PC-3 (cell line): ENCODE measurements at regions of chr21 and their contacts with region 1.

Region 1: GRCh38 chr21:14737922-14738321 is 191.8 kb upstream of the SAMSN1 start:
- DNase-seq: peak; percentile 83
- ATAC-seq: peak; percentile 81
- H3K4me3 ChIP-seq: no peak overlapping the region
- H3K27ac ChIP-seq: no peak overlapping the region
- H3K4me1 ChIP-seq: peaks cover 19% of the 10 kb centered on the region
- H3K27me3 ChIP-seq: no peaks in the 10 kb centered on the region
- CTCF ChIP-seq: peak; percentile 92

Region 2: GRCh38 chr21:14438211-14438610 is 299.7 kb before region 1 on chr21:
- CTCF ChIA-PET with region 1: no interaction called
- POLR2A ChIA-PET with region 1: no interaction called
- intact Hi-C with region 1: loop called (anchors 5 kb)
- DNase-seq: no peak
- ATAC-seq: no peak
- H3K4me3 ChIP-seq: no peak overlapping the region
- H3K27ac ChIP-seq: no peak overlapping the region
- H3K4me1 ChIP-seq: no peaks in the 10 kb centered on the region
- H3K27me3 ChIP-seq: no peaks in the 10 kb centered on the region
- CTCF ChIP-seq: no peak

Region 3: DNA sequence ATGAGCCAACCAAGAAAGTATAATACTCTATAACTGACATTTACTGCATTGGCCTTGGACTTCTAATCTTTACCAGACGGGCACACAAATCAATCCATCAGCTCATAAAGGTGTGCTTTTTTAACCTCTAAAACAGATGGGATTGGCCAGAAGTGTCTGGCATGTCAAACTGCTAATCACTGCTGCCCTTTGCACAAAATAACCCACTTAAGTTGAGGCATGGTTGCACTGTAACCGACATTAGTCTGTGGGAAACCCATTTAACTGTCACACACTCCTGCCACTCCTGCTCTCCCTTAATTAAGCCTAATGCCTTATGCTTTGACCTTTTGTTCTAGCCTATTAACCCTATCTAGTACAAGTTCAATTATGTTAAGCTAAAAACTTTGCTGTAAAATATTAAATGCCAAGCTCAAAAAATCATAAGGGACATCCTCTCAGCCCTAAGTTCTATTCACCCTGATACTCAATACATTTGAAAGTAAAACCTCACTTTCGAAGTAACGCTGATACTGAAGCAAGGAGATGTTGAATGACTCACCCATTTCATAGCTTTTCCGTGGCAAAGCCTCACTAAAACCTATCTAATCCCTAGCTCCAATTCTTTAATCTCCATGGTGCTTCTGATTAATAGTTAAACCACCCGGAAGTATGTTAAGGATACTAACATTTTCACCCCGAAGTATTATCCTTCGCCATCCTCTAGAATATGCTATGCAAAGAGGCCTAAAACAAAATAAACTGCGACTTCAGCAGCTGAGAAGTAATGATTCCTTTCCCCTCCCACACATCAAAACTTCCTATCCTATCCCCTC is 313.9 kb after region 1 on chr21:
- CTCF ChIA-PET with region 1: no interaction called
- POLR2A ChIA-PET with region 1: no interaction called
- intact Hi-C with region 1: loop called (anchors 10 kb)
- DNase-seq: peak; percentile 61
- ATAC-seq: peak; percentile 43
- H3K4me3 ChIP-seq: peak overlapping the region; percentile 59
- H3K27ac ChIP-seq: peak overlapping the region; percentile 36
- H3K4me1 ChIP-seq: peaks cover 58% of the 10 kb centered on the region
- H3K27me3 ChIP-seq: no peaks in the 10 kb centered on the region
- CTCF ChIP-seq: no peak

Region 4: GRCh38 chr21:16650714-16651366 is 1912.9 kb after region 1 on chr21:
- CTCF ChIA-PET with region 1: no interaction called
- POLR2A ChIA-PET with region 1: no interaction called
- intact Hi-C with region 1: no loop called
- DNase-seq: no peak
- ATAC-seq: no peak
- H3K4me3 ChIP-seq: no peak overlapping the region
- H3K27ac ChIP-seq: no peak overlapping the region
- H3K4me1 ChIP-seq: no peaks in the 10 kb centered on the region
- H3K27me3 ChIP-seq: 0 out of 2 replicates have a peak, but pooled peaks cover 4% of the 10 kb centered on the region
- CTCF ChIP-seq: no peak